GM12878 (cell line): ENCODE measurements at regions of chr1 and their contacts with region 1.

Region 1: GRCh38 chr1:177800400-177801088 is 169.3 kb downstream of the SEC16B start:
- DNase-seq: peak; percentile 62
- ATAC-seq: peak; percentile 88
- H3K4me3 ChIP-seq: no peak overlapping the region
- H3K27ac ChIP-seq: no peak overlapping the region
- H3K4me1 ChIP-seq: peaks cover 4% of the 10 kb centered on the region; the same call in 1 of the 2 replicates
- H3K27me3 ChIP-seq: no peaks in the 10 kb centered on the region
- CTCF ChIP-seq: no peak
- EP300 ChIP-seq: no peak
- POLR2A ChIP-seq: no peak
- RAD21 ChIP-seq: no peak

Region 2: GRCh38 chr1:177786176-177786745 is 14.3 kb before region 1 on chr1:
- CTCF ChIA-PET with region 1: interaction called, 27 read pairs
- POLR2A ChIA-PET with region 1: interaction called, 5 read pairs
- RAD21 ChIA-PET with region 1: interaction called, 5 read pairs
- SMC1A ChIA-PET with region 1: interaction called, 20 read pairs
- in situ Hi-C with region 1: no loop called
- intact Hi-C with region 1: no loop called
- DNase-seq: no peak
- ATAC-seq: no peak
- H3K4me3 ChIP-seq: no peak overlapping the region
- H3K27ac ChIP-seq: no peak overlapping the region
- H3K4me1 ChIP-seq: no peaks in the 10 kb centered on the region
- H3K27me3 ChIP-seq: no peaks in the 10 kb centered on the region
- CTCF ChIP-seq: no peak
- EP300 ChIP-seq: no peak
- POLR2A ChIP-seq: no peak
- RAD21 ChIP-seq: no peak

Region 3: GRCh38 chr1:177824508-177824982 is 24.0 kb after region 1 on chr1:
- CTCF ChIA-PET with region 1: interaction called, 4 read pairs
- POLR2A ChIA-PET with region 1: interaction called, 5 read pairs
- RAD21 ChIA-PET with region 1: interaction called, 5 read pairs
- SMC1A ChIA-PET with region 1: interaction called, 16 read pairs
- in situ Hi-C with region 1: no loop called
- intact Hi-C with region 1: no loop called
- DNase-seq: no peak
- ATAC-seq: peak; percentile 65
- H3K4me3 ChIP-seq: no peak overlapping the region
- H3K27ac ChIP-seq: no peak overlapping the region
- H3K4me1 ChIP-seq: no peaks in the 10 kb centered on the region
- H3K27me3 ChIP-seq: no peaks in the 10 kb centered on the region
- CTCF ChIP-seq: no peak
- EP300 ChIP-seq: no peak
- POLR2A ChIP-seq: no peak
- RAD21 ChIP-seq: no peak

Region 4: DNA sequence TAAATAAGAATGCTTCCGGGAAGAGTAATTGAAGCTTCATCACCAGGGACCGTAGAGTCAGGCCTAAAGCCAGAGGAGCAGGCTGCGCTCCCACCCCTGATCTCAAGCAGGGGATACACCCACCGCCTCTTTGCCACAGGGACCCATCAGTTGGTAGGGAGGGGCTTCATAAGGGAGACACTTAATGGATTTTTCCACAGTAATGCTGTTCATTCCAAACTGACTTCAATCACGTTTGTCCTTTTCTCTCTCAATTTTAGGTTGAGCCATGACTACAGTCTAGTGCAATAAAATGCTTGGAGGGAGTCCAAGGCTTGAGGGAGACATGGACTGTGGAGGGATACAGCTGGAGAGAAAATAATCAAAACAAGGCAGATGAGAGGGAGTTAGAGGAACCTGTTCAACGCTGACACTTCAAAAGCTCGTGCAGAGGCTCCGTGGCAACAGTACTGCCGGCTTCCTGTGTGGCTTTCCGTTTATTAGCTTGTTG is 57.8 kb after region 1 on chr1:
- CTCF ChIA-PET with region 1: no interaction called
- POLR2A ChIA-PET with region 1: interaction called, 5 read pairs
- RAD21 ChIA-PET with region 1: interaction called, 9 read pairs
- SMC1A ChIA-PET with region 1: interaction called, 12 read pairs
- in situ Hi-C with region 1: no loop called
- intact Hi-C with region 1: no loop called
- DNase-seq: no peak
- ATAC-seq: peak; percentile 55
- H3K4me3 ChIP-seq: no peak overlapping the region
- H3K27ac ChIP-seq: no peak overlapping the region
- H3K4me1 ChIP-seq: no peaks in the 10 kb centered on the region
- H3K27me3 ChIP-seq: no peaks in the 10 kb centered on the region
- CTCF ChIP-seq: no peak
- EP300 ChIP-seq: no peak
- POLR2A ChIP-seq: no peak
- RAD21 ChIP-seq: no peak

Region 5: DNA sequence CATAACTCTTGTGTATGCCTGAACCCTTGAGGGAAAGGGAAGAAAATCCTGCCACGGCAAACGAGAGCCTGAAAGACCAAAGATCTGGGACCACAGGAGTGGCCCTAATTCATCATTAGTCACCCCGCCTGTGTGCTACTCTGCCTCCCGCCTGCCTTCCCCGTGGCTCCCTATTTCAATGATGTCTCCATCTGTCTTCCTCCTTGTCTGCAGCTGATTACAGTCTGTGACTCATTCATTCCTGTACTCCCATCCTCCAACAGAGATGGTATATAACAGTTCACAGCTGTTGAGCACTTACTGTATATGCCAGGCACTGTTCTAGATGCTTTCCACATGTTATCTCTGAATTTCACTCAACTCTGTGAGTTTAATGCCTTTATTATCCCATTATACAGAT is 72.7 kb after region 1 on chr1:
- CTCF ChIA-PET with region 1: no interaction called
- POLR2A ChIA-PET with region 1: no interaction called
- RAD21 ChIA-PET with region 1: no interaction called
- SMC1A ChIA-PET with region 1: no interaction called
- in situ Hi-C with region 1: no loop called
- intact Hi-C with region 1: no loop called
- DNase-seq: no peak
- ATAC-seq: no peak
- H3K4me3 ChIP-seq: no peak overlapping the region
- H3K27ac ChIP-seq: no peak overlapping the region
- H3K4me1 ChIP-seq: no peaks in the 10 kb centered on the region
- H3K27me3 ChIP-seq: no peaks in the 10 kb centered on the region
- CTCF ChIP-seq: no peak
- EP300 ChIP-seq: no peak
- POLR2A ChIP-seq: no peak
- RAD21 ChIP-seq: no peak

Region 6: GRCh38 chr1:178844436-178844835 is 1043.9 kb after region 1 on chr1:
- CTCF ChIA-PET with region 1: no interaction called
- POLR2A ChIA-PET with region 1: no interaction called
- RAD21 ChIA-PET with region 1: no interaction called
- SMC1A ChIA-PET with region 1: no interaction called
- in situ Hi-C with region 1: no loop called
- intact Hi-C with region 1: no loop called
- DNase-seq: no peak
- ATAC-seq: no peak
- H3K4me3 ChIP-seq: no peak overlapping the region
- H3K27ac ChIP-seq: no peak overlapping the region
- H3K4me1 ChIP-seq: no peaks in the 10 kb centered on the region
- H3K27me3 ChIP-seq: no peaks in the 10 kb centered on the region
- CTCF ChIP-seq: no peak
- EP300 ChIP-seq: no peak
- POLR2A ChIP-seq: no peak
- RAD21 ChIP-seq: no peak